Lower leg skin (tissue), 4 donors: ENCODE measurements at regions of chr4 and their contacts with region 1.

Region 1: GRCh38 chr4:158610790-158611189 is 60.9 kb downstream of the C4orf46 start:
- DNase-seq: no peak
- H3K4me3 ChIP-seq: no peak overlapping the region
- CTCF ChIP-seq: no peak
- POLR2A ChIP-seq: no peak

Region 2: GRCh38 chr4:158395889-158396288 is 214.9 kb before region 1 on chr4:
- intact Hi-C with region 1: loop called (anchors 10 kb)
- DNase-seq: no peak
- H3K4me3 ChIP-seq: no peak overlapping the region
- CTCF ChIP-seq: no peak
- POLR2A ChIP-seq: no peak